Calu3 (cell line): ENCODE measurements at regions of chr14 and their contacts with region 1.

Region 1: GRCh38 chr14:29710015-29710565 is 217.6 kb downstream of the PRKD1 start:
- DNase-seq: peak; percentile 2
- H3K4me3 Mint-ChIP-seq: no peak overlapping the region
- H3K27ac Mint-ChIP-seq: no peak overlapping the region
- H3K4me1 Mint-ChIP-seq: peaks cover 10% of the 10 kb centered on the region
- H3K27me3 Mint-ChIP-seq: no peaks in the 10 kb centered on the region
- CTCF ChIP-seq: no peak

Region 2: GRCh38 chr14:29376237-29376636 is 333.9 kb before region 1 on chr14:
- CTCF ChIA-PET with region 1: no interaction called
- intact Hi-C with region 1: loop called (anchors 2 kb)
- DNase-seq: no peak
- H3K4me3 Mint-ChIP-seq: no peak overlapping the region
- H3K27ac Mint-ChIP-seq: no peak overlapping the region
- H3K4me1 Mint-ChIP-seq: no peaks in the 10 kb centered on the region
- H3K27me3 Mint-ChIP-seq: peaks cover 8% of the 10 kb centered on the region
- CTCF ChIP-seq: no peak

Region 3: DNA sequence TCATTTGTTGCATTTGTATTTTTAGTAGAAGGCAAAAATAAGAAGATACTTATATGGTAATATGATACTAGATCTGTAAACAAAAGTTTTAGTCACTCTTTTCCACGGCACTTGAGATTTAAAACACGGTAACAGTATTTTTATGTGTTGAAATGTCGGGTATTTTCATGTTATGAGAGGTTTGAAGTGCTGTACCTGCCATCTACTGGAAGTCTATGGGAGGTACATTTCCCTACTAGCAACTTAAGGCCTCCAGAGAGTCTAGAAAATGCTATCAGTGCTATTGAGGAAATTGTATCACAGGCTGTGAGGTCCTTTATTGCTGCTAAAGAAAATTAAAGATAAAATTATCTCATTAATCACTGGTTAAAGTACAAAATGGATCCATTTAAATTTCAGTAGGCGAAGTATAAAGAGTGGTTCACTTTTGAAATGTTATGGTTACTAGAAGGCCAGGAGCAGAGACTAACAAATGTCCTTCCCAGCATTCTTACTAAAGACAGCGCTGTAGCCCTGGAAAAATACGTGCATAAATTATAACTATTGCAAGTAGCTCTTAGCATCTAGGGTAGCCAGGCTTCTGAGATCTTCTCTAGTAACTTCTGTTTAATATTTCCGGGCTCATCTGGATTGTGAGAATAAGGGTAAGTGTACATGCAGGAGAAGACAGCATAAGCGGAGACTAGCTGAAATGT is 295.2 kb after region 1 on chr14:
- CTCF ChIA-PET with region 1: no interaction called
- intact Hi-C with region 1: loop called (anchors 1 kb)
- DNase-seq: peak; percentile 8
- H3K4me3 Mint-ChIP-seq: no peak overlapping the region
- H3K27ac Mint-ChIP-seq: no peak overlapping the region
- H3K4me1 Mint-ChIP-seq: no peaks in the 10 kb centered on the region
- H3K27me3 Mint-ChIP-seq: no peaks in the 10 kb centered on the region
- CTCF ChIP-seq: peak; percentile 41

Region 4: GRCh38 chr14:30305346-30305745 is 595.3 kb after region 1 on chr14:
- CTCF ChIA-PET with region 1: no interaction called
- intact Hi-C with region 1: no loop called
- DNase-seq: no peak
- H3K4me3 Mint-ChIP-seq: no peak overlapping the region
- H3K27ac Mint-ChIP-seq: no peak overlapping the region
- H3K4me1 Mint-ChIP-seq: no peaks in the 10 kb centered on the region
- H3K27me3 Mint-ChIP-seq: peaks cover 18% of the 10 kb centered on the region
- CTCF ChIP-seq: no peak